Activated CD4-positive, alpha-beta T cell treated with anti-CD3 and anti-CD28 coated beads, Interleukin-2, amount 10 ng/mL, durations not matched to agents 24 days and 14 days (primary cell): ENCODE measurements at regions of chr13 and their contacts with region 1.

Region 1: DNA sequence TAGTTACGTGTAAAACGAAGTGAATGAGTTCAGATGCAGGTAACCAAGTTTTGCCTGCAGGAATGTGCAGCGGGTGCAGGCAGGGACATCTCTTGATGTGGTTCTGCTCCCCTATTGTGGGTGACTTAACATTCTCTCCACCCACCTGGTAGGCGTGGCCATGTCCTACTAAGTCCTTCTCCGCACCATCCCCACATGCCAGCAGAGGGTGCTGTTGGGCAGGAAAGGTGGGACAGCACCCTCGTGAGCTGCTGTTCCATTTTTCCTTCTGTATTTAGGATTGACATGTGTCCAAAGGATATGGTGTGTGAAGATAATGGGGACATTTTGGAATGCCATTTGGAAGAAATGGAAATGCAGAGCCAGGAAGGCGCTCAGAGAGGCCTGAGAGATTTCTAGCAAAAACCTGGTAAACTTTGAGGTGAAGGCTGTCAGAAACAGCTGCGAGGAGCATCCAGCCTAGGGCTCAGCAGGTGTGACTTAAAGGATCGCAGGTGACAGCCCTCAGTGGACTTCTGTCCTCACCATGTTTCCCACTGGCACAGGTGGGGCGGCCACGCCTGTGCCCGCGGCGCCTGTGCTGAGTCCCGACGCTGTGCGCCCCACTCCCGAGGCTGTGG is 26.2 kb upstream of the MCF2L start:
- DNase-seq: peak; percentile 98
- H3K4me3 Mint-ChIP-seq: peak overlapping the region; percentile 80
- H3K27ac Mint-ChIP-seq: no peak overlapping the region
- H3K4me1 Mint-ChIP-seq: peaks cover 6% of the 10 kb centered on the region
- H3K27me3 Mint-ChIP-seq: peaks cover 43% of the 10 kb centered on the region

Region 2: GRCh38 chr13:113029487-113030258 is 86.9 kb after region 1 on chr13:
- intact Hi-C with region 1: loop called (anchors 1 kb)
- DNase-seq: peak; percentile 81
- H3K4me3 Mint-ChIP-seq: no peak overlapping the region
- H3K27ac Mint-ChIP-seq: no peak overlapping the region
- H3K4me1 Mint-ChIP-seq: no peaks in the 10 kb centered on the region
- H3K27me3 Mint-ChIP-seq: no peaks in the 10 kb centered on the region

Region 3: DNA sequence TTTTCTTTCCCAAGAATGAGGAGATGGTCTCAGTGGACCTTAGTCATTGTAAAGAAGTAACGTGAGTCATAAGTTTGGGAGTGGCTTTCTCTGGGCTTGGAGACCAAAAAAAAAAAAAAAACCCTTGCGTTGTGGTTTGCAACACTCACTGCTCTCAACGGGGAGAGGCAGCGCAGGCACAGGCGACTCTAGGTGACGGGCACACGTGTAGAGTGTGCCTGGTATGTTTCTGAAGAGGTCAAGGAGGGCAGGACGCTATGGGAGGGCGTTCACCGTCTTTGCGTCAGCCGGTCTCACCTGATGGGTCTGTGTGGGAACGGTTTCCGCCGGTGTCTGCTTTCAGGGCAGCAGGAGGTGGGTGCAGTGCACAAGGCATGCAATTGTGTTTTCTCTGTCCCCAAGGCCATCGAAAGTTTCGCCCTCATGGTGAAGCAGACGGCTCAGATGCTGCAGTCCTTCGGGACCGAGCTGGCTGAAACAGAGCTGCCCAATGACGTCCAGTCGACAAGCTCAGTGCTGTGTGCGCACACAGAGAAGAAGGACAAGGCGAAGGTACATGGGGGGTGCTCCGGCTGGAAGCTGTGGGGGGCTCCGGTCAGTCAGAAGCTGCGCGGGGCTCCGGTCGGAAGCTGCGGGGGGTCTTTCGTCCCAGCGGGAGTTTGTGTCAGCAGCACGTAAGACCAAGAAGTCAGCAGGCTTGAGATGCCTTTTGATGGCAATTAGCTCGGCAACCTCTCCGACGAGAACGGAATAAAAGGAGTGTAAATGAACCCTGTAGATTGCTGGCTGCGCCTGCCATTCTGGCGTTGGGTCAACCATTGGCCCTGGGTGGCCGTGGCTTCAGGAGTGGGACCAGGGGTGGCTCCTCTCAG is 122.0 kb after region 1 on chr13:
- intact Hi-C with region 1: no loop called
- DNase-seq: no peak
- H3K4me3 Mint-ChIP-seq: no peak overlapping the region
- H3K27ac Mint-ChIP-seq: no peak overlapping the region
- H3K4me1 Mint-ChIP-seq: no peaks in the 10 kb centered on the region
- H3K27me3 Mint-ChIP-seq: no peaks in the 10 kb centered on the region

Region 4: DNA sequence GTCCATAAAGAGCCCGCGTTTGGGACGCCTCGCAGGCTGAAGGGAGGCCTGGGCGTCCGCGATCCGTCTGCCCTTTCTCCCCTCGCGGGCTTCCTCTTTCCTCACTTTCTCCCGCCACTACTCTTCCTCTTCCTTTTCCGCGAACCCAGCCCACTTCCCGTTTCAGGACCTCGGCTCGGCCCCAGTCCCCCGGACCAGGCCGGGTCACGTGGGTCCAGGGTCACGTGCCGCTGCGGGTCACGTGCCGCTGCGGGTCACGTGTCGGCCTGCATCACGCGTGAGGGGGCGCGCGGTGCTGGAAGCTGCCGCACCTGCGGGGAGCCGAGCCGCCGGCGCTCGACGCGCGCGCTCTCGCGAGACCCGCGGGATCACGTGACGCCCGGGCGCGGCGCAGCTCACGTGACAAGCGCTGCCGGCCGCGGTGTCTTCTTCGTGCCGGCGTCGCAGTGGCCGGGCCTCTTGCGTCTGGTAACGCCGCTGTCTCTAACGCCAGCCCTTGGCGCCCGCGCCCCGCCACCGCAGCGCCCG is 354.1 kb after region 1 on chr13 and contains the start of gene LAMP1:
- intact Hi-C with region 1: loop called (anchors 10 kb)
- DNase-seq: peak; percentile 100
- H3K4me3 Mint-ChIP-seq: peak within 1 kb of the TSS; percentile 97
- H3K27ac Mint-ChIP-seq: peak within 1 kb of the TSS; percentile 98
- H3K4me1 Mint-ChIP-seq: peaks cover 27% of the 10 kb centered on the region
- H3K27me3 Mint-ChIP-seq: peaks cover 32% of the 10 kb centered on the region
- total RNA-seq, gene LAMP1: 55.3 and 57.5 TPM in 2 replicates